ENCODE measurements at regions of chr6 and their contacts with region 1.

Region 1: GRCh38 chr6:81752138-81752920 is at the start of gene TENT5A:
- DNase-seq: peak; percentile 91 to 93
- ATAC-seq: peak; percentile 84 to 93 (median 88)
- H3K4me3 ChIP-seq: peak within 1 kb of the TSS; percentile 73 to 96 (median 82)
- H3K27ac ChIP-seq: peak within 1 kb of the TSS; percentile 87 to 99 (median 96)
- H3K4me1 ChIP-seq: peaks cover 1 to 45% (median 20%) of the 10 kb centered on the region in 9 donors
- H3K27me3 ChIP-seq: no peaks in the 10 kb centered on the region
- CTCF ChIP-seq: peak in 4 of 9 donors; percentile 13 to 33 (median 28)
- total RNA-seq, gene TENT5A: 37.0 to 72.1 (median 46.9) TPM

Region 2: GRCh38 chr6:80605165-80605989 is 1147.0 kb before region 1 on chr6:
- intact Hi-C with region 1: loop called in 7 of 10 experiments (anchors 5 to 10 kb)
- DNase-seq: peak in 1 of 2 donors; percentile 10
- ATAC-seq: peak in 2 of 8 donors; percentile 52 to 70
- H3K4me3 ChIP-seq: no peak overlapping the region
- H3K27ac ChIP-seq: no peak overlapping the region
- H3K4me1 ChIP-seq: peaks cover 0 to 21% (median 4%) of the 10 kb centered on the region in 9 donors
- H3K27me3 ChIP-seq: no peaks in the 10 kb centered on the region
- CTCF ChIP-seq: peak in 7 of 9 donors; percentile 54 to 69 (median 63)

Region 3: GRCh38 chr6:81465859-81466258 is 286.5 kb before region 1 on chr6:
- intact Hi-C with region 1: loop called in 2 of 10 experiments (anchors 10 kb)
- DNase-seq: no peak
- ATAC-seq: no peak
- H3K4me3 ChIP-seq: no peak overlapping the region
- H3K27ac ChIP-seq: no peak overlapping the region
- H3K4me1 ChIP-seq: no peaks in the 10 kb centered on the region
- H3K27me3 ChIP-seq: no peaks in the 10 kb centered on the region
- CTCF ChIP-seq: peak in 7 of 9 donors; percentile 38 to 61 (median 47)

Region 4: GRCh38 chr6:81894788-81895271 is 142.5 kb after region 1 on chr6:
- intact Hi-C with region 1: loop called in 6 of 10 experiments (anchors 2 to 10 kb)
- DNase-seq: peak; percentile 47 to 69
- ATAC-seq: peak; percentile 80 to 97 (median 90)
- H3K4me3 ChIP-seq: peak overlapping the region in 5 of 10 donors; percentile 9 to 34 (median 23)
- H3K27ac ChIP-seq: peak overlapping the region; percentile 57 to 88 (median 83)
- H3K4me1 ChIP-seq: peaks cover 2 to 66% (median 32%) of the 10 kb centered on the region in 9 donors
- H3K27me3 ChIP-seq: no peaks in the 10 kb centered on the region
- CTCF ChIP-seq: no peak

Region 5: DNA sequence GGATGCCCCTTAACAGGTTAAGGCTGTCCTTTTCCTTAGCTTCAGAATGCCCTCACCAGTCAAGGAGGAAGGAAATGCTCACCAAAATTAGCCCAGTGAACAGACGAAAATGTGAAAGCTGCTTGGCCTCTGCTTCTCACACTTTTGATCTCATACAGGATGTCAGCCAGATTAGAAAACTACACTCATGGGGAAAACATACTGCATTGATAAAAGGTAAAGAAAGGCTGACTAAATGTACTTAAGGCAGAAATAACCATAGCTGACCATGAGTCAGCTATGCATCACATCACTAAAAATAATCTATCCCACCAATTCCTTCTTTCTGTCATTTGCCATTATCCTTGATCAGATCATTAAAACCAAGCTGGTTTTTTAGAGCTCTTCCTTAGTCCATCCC is 198.5 kb after region 1 on chr6:
- intact Hi-C with region 1: no loop called
- DNase-seq: no peak
- ATAC-seq: no peak
- H3K4me3 ChIP-seq: no peak overlapping the region
- H3K27ac ChIP-seq: no peak overlapping the region
- H3K4me1 ChIP-seq: peaks cover 0 to 8% (median 0%) of the 10 kb centered on the region in 9 donors
- H3K27me3 ChIP-seq: no peaks in the 10 kb centered on the region
- CTCF ChIP-seq: no peak

Region 6: DNA sequence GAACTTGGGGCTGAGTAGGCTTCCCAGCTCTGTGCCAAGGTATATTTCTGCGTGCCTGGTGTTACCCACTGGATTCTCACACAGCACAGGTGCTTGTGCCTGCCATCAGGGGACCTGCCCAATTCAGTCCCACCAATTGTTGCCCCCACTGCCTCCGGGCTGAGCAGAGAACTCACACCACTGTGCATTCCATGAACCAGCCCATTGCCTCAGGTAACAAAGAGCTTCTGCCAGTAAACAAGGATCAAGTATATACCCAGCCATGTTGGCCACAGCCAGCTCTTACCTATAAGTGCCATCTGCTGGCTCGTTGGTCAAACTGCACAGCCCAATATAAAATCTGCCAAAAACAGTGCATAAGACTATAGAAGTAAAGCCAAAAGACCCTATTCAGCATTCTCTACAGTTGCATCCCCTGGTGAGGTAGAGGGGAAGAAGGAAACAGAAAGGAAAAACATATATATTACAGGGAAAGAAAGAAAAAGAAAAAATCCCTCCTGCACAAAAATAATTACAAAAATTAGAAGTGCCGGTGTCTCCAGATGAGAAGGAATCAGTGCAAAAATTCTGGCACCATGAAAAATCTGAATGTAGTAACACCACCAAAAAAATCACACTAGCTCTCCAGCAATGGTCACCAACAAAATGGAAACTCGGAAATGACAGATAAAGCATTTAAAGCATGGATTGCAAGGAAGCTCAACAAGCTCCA is 253.9 kb after region 1 on chr6:
- intact Hi-C with region 1: loop called in 3 of 10 experiments (anchors 5 to 10 kb)
- DNase-seq: no peak
- ATAC-seq: peak in 7 of 8 donors; percentile 35 to 64 (median 54)
- H3K4me3 ChIP-seq: no peak overlapping the region
- H3K27ac ChIP-seq: no peak overlapping the region
- H3K4me1 ChIP-seq: no peaks in the 10 kb centered on the region
- H3K27me3 ChIP-seq: no peaks in the 10 kb centered on the region
- CTCF ChIP-seq: peak in 8 of 9 donors; percentile 29 to 61 (median 48)

Region 7: GRCh38 chr6:82166493-82166892 is 414.2 kb after region 1 on chr6:
- intact Hi-C with region 1: loop called in 5 of 10 experiments (anchors 5 to 10 kb)
- DNase-seq: peak in 1 of 2 donors; percentile 35
- ATAC-seq: peak; percentile 69 to 93 (median 84)
- H3K4me3 ChIP-seq: no peak overlapping the region
- H3K27ac ChIP-seq: peak overlapping the region; percentile 2 to 78 (median 60)
- H3K4me1 ChIP-seq: peaks cover 0 to 11% (median 0%) of the 10 kb centered on the region in 9 donors
- H3K27me3 ChIP-seq: no peaks in the 10 kb centered on the region
- CTCF ChIP-seq: no peak

Measured in heart right ventricle (tissue), 16 donors.